ENCODE measurements at regions of chr6 and their contacts with region 1.

Region 1: DNA sequence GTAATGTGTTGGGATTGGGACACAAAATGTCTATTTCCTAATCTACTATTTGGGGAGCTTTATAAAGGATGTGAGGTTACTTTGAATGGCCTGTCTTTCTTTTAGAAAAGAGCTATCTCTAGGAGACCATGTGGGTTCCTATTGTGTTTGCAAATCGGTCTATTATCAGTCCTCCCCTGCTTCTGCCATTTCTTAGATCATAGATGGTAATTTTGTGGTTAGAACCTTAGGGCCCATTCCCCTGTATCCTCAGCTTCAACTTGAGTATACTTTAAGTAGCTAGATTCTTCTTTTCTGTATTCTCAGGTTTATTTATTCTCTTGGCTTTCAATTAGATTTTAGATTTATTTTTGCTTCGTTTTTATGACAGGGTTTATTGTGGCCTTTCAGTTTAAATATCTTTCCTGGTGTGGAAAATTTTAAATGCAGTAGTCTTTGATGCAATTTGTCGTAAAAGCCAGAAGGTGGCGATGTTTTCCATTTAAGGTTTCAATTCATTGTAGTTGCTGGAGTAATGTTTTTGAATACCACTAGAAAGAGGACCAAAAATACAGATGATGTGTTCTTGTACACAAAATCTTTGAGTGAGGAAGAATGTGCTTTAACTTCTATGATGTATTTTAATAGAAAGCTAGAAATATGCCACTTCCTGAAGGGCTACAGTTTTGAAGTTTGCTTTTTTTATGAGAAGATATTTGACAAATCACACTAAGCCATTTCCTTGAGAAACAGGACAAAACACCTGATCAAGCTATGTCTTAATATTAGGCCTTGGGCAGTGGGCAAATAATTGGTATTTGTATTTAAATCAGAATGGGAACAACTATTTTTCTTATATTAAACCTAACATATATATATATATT is 20.3 kb downstream of the TBPL1 start:
- DNase-seq: no peak
- ATAC-seq: peak; percentile 78
- H3K4me3 Mint-ChIP-seq: no peak overlapping the region
- H3K27ac Mint-ChIP-seq: peak overlapping the region; percentile 52
- H3K4me1 Mint-ChIP-seq: peaks cover 50% of the 10 kb centered on the region
- H3K27me3 Mint-ChIP-seq: no peaks in the 10 kb centered on the region
- CTCF ChIP-seq: peak; percentile 89

Region 2: GRCh38 chr6:133952815-133953633 is 20.3 kb before region 1 on chr6 and contains the start of gene TBPL1:
- CTCF ChIA-PET with region 1: interaction called, 40 read pairs
- POLR2A ChIA-PET with region 1: interaction called, 7 read pairs
- intact Hi-C with region 1: no loop called
- DNase-seq: peak; percentile 96
- ATAC-seq: peak; percentile 91
- H3K4me3 Mint-ChIP-seq: peak within 1 kb of the TSS; percentile 92
- H3K27ac Mint-ChIP-seq: peak within 1 kb of the TSS; percentile 96
- H3K4me1 Mint-ChIP-seq: peaks cover 40% of the 10 kb centered on the region
- H3K27me3 Mint-ChIP-seq: no peaks in the 10 kb centered on the region
- CTCF ChIP-seq: no peak
- total RNA-seq, gene TBPL1: 30.9 to 37.8 TPM

Region 3: DNA sequence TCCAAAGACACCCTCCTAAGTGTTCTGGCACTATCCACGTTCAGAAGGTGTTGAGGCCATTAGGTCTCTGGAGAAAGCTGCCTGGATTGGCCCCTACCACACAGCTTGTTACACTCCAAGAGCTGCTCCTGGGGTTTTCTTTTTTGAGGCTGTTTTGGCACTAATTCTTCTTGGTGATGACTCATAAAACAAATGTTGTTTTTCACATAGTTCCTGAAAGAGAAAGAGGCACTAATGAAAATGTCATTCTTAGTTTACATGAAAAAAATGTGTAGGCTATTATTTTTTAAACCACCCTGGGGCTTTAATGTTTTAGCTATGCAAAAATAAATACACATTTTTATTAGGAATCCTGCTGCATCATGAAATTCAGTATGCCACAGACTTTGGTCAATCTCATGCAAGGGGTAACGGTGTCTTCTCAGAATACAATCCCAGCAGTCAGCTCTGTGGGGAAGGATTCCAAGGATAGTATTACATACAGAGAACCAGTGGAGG is 17.8 kb after region 1 on chr6:
- CTCF ChIA-PET with region 1: interaction called, 13 read pairs
- POLR2A ChIA-PET with region 1: no interaction called
- intact Hi-C with region 1: no loop called
- DNase-seq: no peak
- ATAC-seq: no peak
- H3K4me3 Mint-ChIP-seq: no peak overlapping the region
- H3K27ac Mint-ChIP-seq: no peak overlapping the region
- H3K4me1 Mint-ChIP-seq: peaks cover 7% of the 10 kb centered on the region
- H3K27me3 Mint-ChIP-seq: no peaks in the 10 kb centered on the region
- CTCF ChIP-seq: no peak

Region 4: GRCh38 chr6:134047673-134048072 is 74.3 kb after region 1 on chr6:
- CTCF ChIA-PET with region 1: interaction called, 17 read pairs
- POLR2A ChIA-PET with region 1: no interaction called
- intact Hi-C with region 1: no loop called
- DNase-seq: no peak
- ATAC-seq: no peak
- H3K4me3 Mint-ChIP-seq: no peak overlapping the region
- H3K27ac Mint-ChIP-seq: no peak overlapping the region
- H3K4me1 Mint-ChIP-seq: peaks cover 6% of the 10 kb centered on the region
- H3K27me3 Mint-ChIP-seq: peaks cover 5% of the 10 kb centered on the region
- CTCF ChIP-seq: no peak

Measured in activated CD8-positive, alpha-beta T cell treated with anti-CD3 and anti-CD28 coated beads for 36 hours (primary cell).